Heart left ventricle (tissue), 16 donors: ENCODE measurements at regions of chr16 and their contacts with region 1.

Region 1: DNA sequence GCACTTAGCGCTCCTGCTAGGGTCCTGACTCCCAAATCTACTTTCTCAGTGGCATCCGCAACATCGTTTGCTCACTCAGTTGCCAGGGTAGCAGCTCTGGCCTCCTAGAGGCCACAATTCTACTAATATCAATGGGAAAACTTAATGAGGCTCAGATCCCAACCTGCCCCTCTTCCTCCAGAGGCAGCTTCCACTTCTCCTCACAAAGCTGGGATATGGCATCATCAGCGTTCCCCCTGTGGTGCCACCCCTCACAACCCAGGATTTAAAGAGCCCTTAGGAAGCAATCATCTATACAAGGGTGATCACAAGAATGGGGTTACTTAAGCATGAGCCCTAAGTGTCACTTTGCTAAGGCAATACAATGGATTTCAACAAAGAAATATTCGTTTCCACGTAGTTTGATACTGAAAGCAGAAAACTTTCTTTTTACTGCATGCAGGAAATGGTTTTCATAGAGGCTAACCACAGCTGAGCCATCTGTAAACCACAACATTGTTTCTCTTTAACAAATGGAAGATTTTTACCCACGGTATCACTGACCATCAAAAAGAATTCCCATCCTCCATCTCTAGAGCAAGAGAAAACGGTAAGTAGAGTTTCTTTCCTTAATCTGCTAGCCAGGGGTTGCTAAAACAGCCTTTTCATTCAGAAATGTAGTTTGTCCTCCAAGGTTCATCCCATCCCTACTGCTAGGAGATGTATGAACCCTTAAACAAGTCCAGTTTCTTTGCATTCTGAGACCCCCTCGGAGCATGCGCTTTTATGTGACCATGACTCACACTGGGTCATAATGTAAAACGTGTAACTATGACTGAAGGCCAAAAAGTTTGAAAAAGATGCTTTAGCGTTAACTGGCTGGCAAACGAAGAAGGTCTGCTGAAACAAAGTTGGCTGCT is 68.3 kb upstream of the BCAR1 start:
- DNase-seq: no peak
- ATAC-seq: no peak
- H3K4me3 ChIP-seq: no peak overlapping the region
- H3K27ac ChIP-seq: peak overlapping the region in 6 of 12 donors; percentile 13 to 75 (median 30)
- H3K4me1 ChIP-seq: peaks cover 0 to 35% (median 17%) of the 10 kb centered on the region in 12 donors
- H3K27me3 ChIP-seq: peaks cover 0 to 35% (median 0%) of the 10 kb centered on the region in 9 donors
- CTCF ChIP-seq: no peak
- POLR2A ChIP-seq: no peak

Region 2: DNA sequence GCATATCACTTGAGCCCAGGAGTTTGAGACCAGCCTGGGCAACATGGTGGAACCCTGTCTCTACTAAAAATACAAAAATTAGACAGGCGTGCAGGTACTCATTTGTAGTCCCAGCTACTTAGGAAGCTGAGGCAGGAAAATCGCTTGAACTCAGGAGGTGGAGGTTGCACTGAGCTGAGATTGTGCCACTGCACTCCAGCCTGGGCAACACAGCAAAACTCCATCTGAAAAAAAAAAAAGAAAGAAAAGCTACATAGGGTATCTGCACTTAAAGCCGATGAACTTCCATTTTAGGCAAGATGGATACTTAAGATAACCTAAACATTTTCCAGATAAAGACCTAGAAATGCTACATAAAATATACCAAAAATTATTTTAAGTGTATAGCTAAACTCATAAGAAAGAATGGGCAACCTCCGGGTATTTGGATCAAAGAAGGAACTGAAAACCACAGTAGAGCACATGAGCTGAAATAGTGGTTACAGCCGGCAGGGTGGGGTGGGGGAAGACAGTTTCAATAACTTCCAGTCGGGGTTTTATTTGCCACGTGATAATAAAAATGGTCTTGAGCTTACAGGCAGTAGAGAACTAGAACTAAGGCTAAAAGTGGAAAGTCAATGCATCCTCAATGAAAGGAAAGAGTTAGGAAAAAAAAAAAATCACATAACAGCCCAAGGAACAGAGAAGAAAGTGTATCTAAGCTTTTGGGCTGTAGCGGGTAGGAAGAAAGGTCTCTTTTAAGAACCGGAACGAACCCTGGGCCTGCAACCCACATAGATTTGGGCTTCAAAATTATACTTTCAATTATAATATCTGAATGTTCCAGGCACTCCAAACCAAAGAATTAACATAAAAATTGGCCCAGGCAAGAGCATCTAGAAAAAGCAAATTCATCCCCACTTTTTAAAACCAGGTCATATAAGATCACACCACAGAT is 60.4 kb after region 1 on chr16:
- intact Hi-C with region 1: loop called in 2 of 10 experiments (anchors 10 kb)
- DNase-seq: no peak
- ATAC-seq: peak in 1 of 4 donors; percentile 45
- H3K4me3 ChIP-seq: no peak overlapping the region
- H3K27ac ChIP-seq: peak overlapping the region in 3 of 12 donors; percentile 14 to 35 (median 17)
- H3K4me1 ChIP-seq: peaks cover 0 to 49% (median 6%) of the 10 kb centered on the region in 12 donors
- H3K27me3 ChIP-seq: peaks cover 0 to 57% (median 0%) of the 10 kb centered on the region in 9 donors
- CTCF ChIP-seq: no peak
- POLR2A ChIP-seq: no peak